HepG2 (cell line): ENCODE measurements at regions of chr14 and their contacts with region 1.

Region 1: DNA sequence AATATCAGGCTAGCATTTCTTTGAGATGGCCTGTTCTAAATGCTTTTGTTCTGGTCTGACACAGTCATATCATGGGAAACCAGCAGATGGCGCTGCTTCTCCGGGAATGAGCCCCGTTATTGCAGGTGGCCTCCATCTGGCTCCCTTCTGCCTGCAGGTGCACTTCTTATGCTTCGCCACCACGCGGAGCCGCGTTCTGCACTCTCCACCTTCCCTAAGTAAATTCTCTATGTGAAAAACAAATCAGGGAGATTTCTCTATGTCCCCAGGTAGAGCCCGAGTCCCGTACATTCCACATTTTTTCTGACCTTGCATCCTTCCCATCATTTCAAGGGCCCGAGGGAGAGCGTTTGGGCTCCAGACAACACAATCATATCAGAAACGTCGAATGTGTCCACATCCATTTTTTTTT is 26.2 kb downstream of the GLRX5 start:
- DNase-seq: peak; percentile 84
- ATAC-seq: peak; percentile 90
- H3K4me3 ChIP-seq: no peak overlapping the region
- H3K27ac ChIP-seq: no peak overlapping the region
- H3K4me1 ChIP-seq: peaks cover 41% of the 10 kb centered on the region
- H3K27me3 ChIP-seq: no peaks in the 10 kb centered on the region
- CTCF ChIP-seq: peak; percentile 97
- EP300 ChIP-seq: no peak
- POLR2A ChIP-seq: no peak
- RAD21 ChIP-seq: peak; percentile 97

Region 2: DNA sequence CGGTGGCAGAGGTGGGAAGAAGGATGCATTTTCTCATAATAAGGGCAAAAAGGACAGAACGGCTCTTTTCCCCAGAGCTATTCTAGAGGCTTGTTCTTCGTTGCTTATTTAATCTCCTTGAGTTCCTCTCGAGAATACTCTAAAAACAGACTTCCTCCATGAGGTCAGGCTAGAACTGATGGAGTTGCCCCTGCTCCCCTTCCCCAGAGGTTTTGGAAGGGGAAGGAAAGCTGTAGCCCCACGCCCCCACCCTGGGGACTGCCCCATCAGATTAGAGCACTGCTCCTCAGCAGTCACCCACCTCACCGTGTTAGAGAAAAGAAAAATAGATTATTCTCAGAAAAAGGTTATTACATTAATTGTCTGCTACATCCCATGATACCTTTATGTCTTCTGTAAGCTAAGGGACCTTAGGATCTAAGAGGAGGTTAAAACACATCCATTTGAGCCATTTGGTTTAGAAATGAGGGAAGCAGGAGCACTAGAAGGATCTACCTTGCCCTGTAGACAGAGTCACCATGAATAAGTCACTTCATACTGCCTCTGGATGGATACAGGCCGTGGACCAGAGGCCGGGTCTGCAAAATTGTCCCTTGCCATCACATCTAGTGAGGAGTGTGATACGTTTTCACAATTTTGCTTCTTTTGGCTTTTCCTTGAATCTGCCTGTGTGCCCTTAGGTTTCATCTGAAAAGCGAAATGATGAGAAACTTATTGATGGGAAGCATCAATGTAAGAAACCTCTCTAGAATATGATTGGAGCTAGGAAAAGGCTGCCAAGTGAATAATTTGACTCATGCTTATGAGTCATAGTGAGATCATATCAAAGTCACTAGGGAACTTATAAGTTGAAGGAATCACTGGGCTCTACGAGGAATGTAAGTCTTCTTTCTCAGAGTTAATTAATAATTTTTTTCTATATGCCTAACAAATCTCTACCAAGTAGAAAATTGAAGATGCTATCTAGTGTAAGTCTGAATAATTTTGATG is 15.5 kb before region 1 on chr14:
- CTCF ChIA-PET with region 1: interaction called, 5 read pairs
- POLR2A ChIA-PET with region 1: interaction called, 11 read pairs
- in situ Hi-C with region 1: no loop called
- intact Hi-C with region 1: no loop called
- DNase-seq: no peak
- ATAC-seq: no peak
- H3K4me3 ChIP-seq: no peak overlapping the region
- H3K27ac ChIP-seq: no peak overlapping the region
- H3K4me1 ChIP-seq: peaks cover 75% of the 10 kb centered on the region
- H3K27me3 ChIP-seq: no peaks in the 10 kb centered on the region
- CTCF ChIP-seq: no peak
- EP300 ChIP-seq: no peak
- POLR2A ChIP-seq: no peak
- RAD21 ChIP-seq: no peak

Region 3: DNA sequence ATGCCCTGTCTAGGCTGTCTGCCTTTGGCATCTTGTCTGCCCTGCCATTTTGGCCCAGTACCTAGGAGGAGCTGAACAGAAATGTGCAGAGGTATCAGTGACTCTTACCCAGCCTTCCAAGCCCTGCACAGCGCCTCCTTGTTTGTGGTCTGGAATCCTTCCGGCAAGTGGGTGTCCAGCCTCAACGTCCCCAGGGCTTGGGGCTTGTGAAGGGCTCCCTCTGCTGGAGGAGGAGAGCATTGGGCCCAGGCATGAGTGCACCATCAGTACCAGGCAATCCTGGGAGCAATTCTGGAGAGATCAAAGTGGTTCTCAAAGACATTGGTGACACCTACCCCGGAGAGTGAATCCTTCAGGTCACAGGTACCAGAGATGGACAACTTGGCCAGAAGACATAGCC is 122.8 kb after region 1 on chr14:
- CTCF ChIA-PET with region 1: interaction called, 23 read pairs
- POLR2A ChIA-PET with region 1: no interaction called
- in situ Hi-C with region 1: loop called (anchors 5 kb)
- intact Hi-C with region 1: loop called (anchors 1 kb)
- DNase-seq: peak; percentile 11
- ATAC-seq: peak; percentile 75
- H3K4me3 ChIP-seq: no peak overlapping the region
- H3K27ac ChIP-seq: no peak overlapping the region
- H3K4me1 ChIP-seq: no peaks in the 10 kb centered on the region
- H3K27me3 ChIP-seq: 0 out of 5 replicates have a peak, but pooled peaks cover 0 to 2% of the 10 kb centered on the region in 2 experiments
- CTCF ChIP-seq: peak; percentile 63
- EP300 ChIP-seq: no peak
- POLR2A ChIP-seq: no peak
- RAD21 ChIP-seq: peak; percentile 34; the same call in 1 of the 2 replicates

Region 4: DNA sequence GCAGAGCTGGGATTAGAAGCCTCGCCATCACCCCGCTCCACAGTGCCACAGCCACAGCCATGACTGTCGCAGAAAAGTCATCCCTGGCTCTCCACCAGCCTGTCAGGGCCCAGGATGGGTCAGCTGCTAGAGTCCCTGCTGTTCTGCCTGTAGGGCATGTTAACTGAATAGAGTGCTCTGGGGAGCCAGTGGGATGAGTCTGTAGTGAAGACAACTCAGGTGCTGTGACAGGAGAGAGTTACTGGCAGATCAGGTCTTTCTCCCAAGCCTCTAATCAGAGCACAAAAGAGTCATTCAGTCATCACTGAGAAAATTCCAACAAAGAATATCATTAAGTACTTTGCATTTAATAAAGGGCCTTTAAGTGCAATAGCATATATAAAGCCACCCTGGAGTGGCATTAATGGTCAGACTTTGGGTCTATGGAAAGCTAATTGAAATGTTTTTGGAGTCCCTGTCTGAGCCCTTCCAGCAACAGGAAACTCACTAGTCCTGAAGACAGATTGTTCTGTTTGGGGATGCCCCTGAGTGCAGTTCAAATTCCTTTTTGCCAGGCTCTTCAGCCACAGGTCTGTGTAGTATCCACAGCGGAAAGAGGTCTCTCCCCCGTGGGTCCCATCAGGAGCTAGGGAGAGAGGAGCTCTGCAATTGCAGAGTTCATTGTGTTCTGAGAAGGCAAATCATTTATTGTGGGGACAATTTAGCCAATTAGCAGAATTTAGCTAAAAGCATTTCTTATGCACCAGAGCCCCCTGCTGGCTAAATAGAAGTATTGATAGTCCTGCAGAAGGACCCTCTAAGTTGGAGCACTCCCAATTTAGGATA is 433.0 kb after region 1 on chr14:
- CTCF ChIA-PET with region 1: interaction called, 41 read pairs
- POLR2A ChIA-PET with region 1: no interaction called
- in situ Hi-C with region 1: loop called (anchors 10 kb)
- intact Hi-C with region 1: no loop called
- DNase-seq: peak; percentile 39
- ATAC-seq: peak; percentile 51
- H3K4me3 ChIP-seq: no peak overlapping the region
- H3K27ac ChIP-seq: no peak overlapping the region
- H3K4me1 ChIP-seq: no peaks in the 10 kb centered on the region
- H3K27me3 ChIP-seq: no peaks in the 10 kb centered on the region
- CTCF ChIP-seq: peak; percentile 72
- EP300 ChIP-seq: no peak
- POLR2A ChIP-seq: no peak
- RAD21 ChIP-seq: peak; percentile 69

Region 5: DNA sequence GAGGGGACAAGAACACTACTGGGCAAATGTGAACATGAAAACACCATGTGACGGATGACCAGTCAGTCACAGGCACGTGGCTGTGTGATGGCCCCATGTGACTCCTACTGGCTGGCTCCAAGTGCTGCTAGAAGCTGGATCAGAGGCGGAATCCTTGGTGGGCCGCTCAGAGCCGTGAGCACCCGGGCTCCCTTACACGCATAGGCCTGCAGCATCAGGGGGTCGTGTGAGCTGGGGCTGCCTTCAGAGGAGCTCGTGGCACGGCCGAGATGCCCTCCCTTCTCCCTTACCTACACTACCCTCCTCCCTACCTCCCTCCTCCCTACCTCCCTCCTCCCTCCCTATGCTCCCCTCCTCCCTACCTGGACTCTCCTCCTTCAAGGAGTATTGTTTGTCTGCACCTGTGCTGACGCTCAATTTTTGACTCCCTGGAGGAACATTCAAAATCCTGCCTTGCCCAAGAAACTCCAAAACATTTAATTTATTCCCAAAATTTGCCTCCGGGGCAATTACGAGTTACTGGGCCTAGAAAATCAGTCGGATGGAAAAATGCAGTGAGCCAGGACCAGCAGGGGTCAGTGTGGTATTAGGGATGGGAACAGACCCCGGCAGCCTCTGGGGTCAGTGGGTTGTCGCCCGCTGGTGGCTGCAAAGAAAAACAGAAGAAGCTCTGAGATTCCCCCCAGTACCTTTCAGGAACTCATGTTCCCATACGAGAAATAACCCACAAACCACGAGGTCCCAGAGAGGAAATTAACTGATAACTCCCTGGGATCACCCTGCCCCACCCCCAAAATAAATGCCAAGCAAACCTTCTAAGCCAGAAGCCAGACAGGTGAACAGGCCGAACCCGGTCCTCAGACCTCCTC is 539.4 kb after region 1 on chr14:
- CTCF ChIA-PET with region 1: interaction called, 5 read pairs
- POLR2A ChIA-PET with region 1: no interaction called
- in situ Hi-C with region 1: no loop called
- intact Hi-C with region 1: loop called (anchors 1 kb)
- DNase-seq: peak; percentile 60
- ATAC-seq: peak; percentile 57
- H3K4me3 ChIP-seq: no peak overlapping the region
- H3K27ac ChIP-seq: no peak overlapping the region
- H3K4me1 ChIP-seq: peaks cover 46% of the 10 kb centered on the region
- H3K27me3 ChIP-seq: no peaks in the 10 kb centered on the region; a peak in 1 of 5 replicates
- CTCF ChIP-seq: peak; percentile 90
- EP300 ChIP-seq: no peak
- POLR2A ChIP-seq: no peak
- RAD21 ChIP-seq: peak; percentile 90